ENCODE measurements at regions of chr18 and their contacts with region 1.

Region 1: GRCh38 chr18:35143622-35144596 is 96.9 kb upstream of the ZNF397 start:
- DNase-seq: peak; percentile 47
- ATAC-seq: peak; percentile 100
- H3K4me3 ChIP-seq: no peak overlapping the region
- H3K27ac ChIP-seq: no peak overlapping the region
- H3K4me1 ChIP-seq: 0 out of 2 replicates have a peak, but pooled peaks cover 9% of the 10 kb centered on the region
- H3K27me3 ChIP-seq: no peaks in the 10 kb centered on the region
- CTCF ChIP-seq: peak; percentile 86
- EP300 ChIP-seq: no peak
- POLR2A ChIP-seq: no peak
- RAD21 ChIP-seq: peak; percentile 80

Region 2: GRCh38 chr18:34867520-34867919 is 276.4 kb before region 1 on chr18:
- CTCF ChIA-PET with region 1: interaction called, 6 read pairs
- POLR2A ChIA-PET with region 1: no interaction called
- in situ Hi-C with region 1: no loop called
- intact Hi-C with region 1: loop called (anchors 1 kb)
- DNase-seq: peak; percentile 12
- ATAC-seq: peak; percentile 76
- H3K4me3 ChIP-seq: no peak overlapping the region
- H3K27ac ChIP-seq: no peak overlapping the region
- H3K4me1 ChIP-seq: no peaks in the 10 kb centered on the region
- H3K27me3 ChIP-seq: no peaks in the 10 kb centered on the region
- CTCF ChIP-seq: peak; percentile 68
- EP300 ChIP-seq: no peak
- POLR2A ChIP-seq: no peak
- RAD21 ChIP-seq: 0 out of 2 replicates have a peak, but pooled peaks have one; percentile 17

Region 3: DNA sequence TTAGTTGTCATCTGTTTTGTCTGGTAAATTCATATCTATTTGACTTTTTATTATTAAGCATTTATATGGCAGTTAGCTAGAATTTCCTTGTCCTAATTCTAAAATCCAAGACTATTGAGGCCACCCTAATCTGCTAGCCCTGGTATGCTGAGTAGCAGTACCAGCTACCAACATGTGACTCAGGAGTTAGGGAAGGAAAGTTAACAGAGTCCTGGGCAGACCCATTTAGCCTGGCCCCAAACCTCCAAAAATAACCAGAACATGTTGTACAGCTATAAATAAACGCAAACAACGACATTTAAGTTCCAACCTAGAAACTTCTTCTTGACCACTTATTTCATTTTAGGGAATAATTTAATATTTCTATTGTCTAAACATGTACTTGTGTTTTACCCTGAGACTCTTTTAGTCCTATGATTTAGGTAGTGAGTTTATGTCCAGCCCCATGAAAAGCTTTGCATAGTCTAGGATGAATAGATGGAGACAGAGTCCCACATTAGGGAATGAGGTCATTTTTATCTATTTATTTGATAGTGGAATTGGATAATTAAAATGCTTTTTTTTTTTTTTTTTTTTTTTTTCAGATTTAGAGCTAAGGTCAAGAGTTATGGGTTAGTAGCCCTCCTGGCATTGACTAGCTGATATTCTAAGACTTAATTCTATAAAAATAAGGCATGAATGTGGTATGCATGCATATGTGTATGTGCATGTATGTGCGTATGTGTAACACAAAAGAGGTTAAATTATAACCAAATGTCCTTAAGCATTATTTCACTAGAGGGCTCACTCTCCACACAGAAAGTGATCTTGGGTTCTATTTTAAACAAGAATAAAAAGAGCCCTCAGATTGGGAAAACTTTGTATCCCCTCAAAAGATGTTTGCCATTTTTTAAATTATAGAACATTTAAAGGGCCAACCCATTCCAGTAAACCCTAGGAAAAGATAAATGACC is 262.8 kb before region 1 on chr18:
- CTCF ChIA-PET with region 1: interaction called, 3 read pairs
- POLR2A ChIA-PET with region 1: no interaction called
- in situ Hi-C with region 1: loop called (anchors 5 kb)
- intact Hi-C with region 1: no loop called
- DNase-seq: peak; percentile 53
- ATAC-seq: peak; percentile 48; the same call in 2 of the 3 replicates
- H3K4me3 ChIP-seq: no peak overlapping the region
- H3K27ac ChIP-seq: no peak overlapping the region
- H3K4me1 ChIP-seq: peaks cover 10% of the 10 kb centered on the region
- H3K27me3 ChIP-seq: no peaks in the 10 kb centered on the region
- CTCF ChIP-seq: peak; percentile 61
- EP300 ChIP-seq: no peak
- POLR2A ChIP-seq: no peak
- RAD21 ChIP-seq: peak; percentile 33; the same call in 1 of the 2 replicates

Region 4: DNA sequence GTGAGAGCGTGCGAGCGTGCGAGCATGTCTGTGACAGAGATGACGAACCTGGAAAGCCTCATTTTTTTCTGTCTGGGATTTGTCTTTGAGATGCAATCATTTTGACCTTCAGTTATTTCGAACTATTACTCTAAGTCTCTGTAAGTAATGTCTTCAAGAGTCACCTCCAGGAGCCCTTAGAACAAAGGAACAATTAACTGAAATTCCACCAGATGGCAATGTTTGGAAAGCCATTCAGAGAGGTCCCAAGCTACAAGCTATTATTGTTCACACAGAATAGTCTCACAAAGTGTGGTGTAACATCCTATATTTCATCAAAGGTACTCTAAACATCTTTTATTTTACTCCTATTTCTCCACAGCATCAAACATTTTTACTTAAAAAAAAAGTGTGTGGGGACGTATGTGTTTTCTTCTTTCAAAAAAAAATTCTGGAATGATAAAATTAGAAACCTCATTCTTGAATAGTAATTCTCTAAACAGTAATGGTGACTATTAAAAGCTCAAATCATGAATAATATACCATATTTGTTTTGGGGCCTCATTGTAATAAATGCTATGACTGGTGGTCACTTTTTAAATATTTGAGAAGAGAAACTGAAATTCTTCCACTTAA is 137.8 kb before region 1 on chr18:
- CTCF ChIA-PET with region 1: interaction called, 22 read pairs
- POLR2A ChIA-PET with region 1: interaction called, 4 read pairs
- in situ Hi-C with region 1: loop called (anchors 25 kb)
- intact Hi-C with region 1: loop called (anchors 1 kb)
- DNase-seq: peak; percentile 60
- ATAC-seq: peak; percentile 83
- H3K4me3 ChIP-seq: no peak overlapping the region
- H3K27ac ChIP-seq: no peak overlapping the region
- H3K4me1 ChIP-seq: 0 out of 2 replicates have a peak, but pooled peaks cover 5% of the 10 kb centered on the region
- H3K27me3 ChIP-seq: no peaks in the 10 kb centered on the region
- CTCF ChIP-seq: peak; percentile 76
- EP300 ChIP-seq: no peak
- POLR2A ChIP-seq: no peak
- RAD21 ChIP-seq: peak; percentile 73

Region 5: DNA sequence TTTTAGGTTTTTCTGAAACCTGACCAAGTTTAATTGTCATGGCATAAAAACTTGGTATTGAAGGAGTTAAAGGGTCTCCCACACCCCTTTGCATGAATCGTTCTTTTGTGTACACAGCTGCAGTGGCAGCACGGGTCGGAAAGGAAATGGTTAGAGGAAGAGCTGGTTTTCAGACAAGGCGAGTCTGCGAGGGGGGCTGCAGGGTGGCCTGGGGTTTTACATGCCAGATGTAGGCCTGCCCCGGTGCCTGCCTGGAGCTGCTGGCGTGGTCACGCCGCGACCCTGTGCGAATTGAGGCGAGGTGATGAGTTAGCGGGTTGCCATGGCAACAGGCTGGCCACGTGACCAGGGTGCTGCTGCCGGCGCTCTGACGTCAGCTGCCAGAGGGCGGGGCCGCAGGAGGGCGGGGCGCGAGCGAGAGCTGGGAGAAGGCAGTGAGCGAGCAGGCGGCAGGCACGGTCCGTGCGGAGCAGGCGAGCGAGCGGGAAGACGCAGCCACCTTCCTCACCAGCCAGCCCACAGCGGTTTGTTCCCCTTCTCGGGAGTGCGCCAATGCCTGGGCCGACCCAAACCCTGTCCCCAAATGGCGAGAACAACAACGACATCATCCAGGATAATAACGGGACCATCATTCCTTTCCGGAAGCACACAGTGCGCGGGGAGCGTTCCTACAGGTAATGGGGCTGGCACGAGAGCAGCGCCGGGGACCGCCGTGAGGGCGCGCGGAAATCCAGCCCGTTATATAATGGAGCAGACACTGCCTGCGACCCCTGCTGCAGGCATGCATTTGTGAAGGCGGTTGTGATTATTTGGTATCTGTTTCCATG is 102.7 kb before region 1 on chr18 and contains the start of gene MAPRE2:
- CTCF ChIA-PET with region 1: no interaction called
- POLR2A ChIA-PET with region 1: no interaction called
- in situ Hi-C with region 1: no loop called
- intact Hi-C with region 1: loop called (anchors 10 kb)
- DNase-seq: peak; percentile 89
- ATAC-seq: peak; percentile 97
- H3K4me3 ChIP-seq: peak within 1 kb of the TSS; percentile 74 to 84 (median 83)
- H3K27ac ChIP-seq: peak within 1 kb of the TSS; percentile 71
- H3K4me1 ChIP-seq: peaks cover 49% of the 10 kb centered on the region
- H3K27me3 ChIP-seq: no peaks in the 10 kb centered on the region
- CTCF ChIP-seq: 0 out of 2 replicates have a peak, but pooled peaks have one; percentile 26
- EP300 ChIP-seq: peak in 1 of 2 experiments; percentile 0; a peak in 1 of 4 replicates
- POLR2A ChIP-seq: peak; percentile 96 to 99
- RAD21 ChIP-seq: 0 out of 2 replicates have a peak, but pooled peaks have one; percentile 39
- total RNA-seq, gene MAPRE2: 34.5 and 59.9 TPM in 2 replicates

Region 6: GRCh38 chr18:35231052-35231451 is 87.1 kb after region 1 on chr18:
- CTCF ChIA-PET with region 1: no interaction called
- POLR2A ChIA-PET with region 1: no interaction called
- in situ Hi-C with region 1: no loop called
- intact Hi-C with region 1: no loop called
- DNase-seq: peak; percentile 87
- ATAC-seq: peak; percentile 97
- H3K4me3 ChIP-seq: peak overlapping the region in 2 of 3 experiments; percentile 19 to 28; a peak in 2 of 6 replicates
- H3K27ac ChIP-seq: no peak overlapping the region
- H3K4me1 ChIP-seq: no peaks in the 10 kb centered on the region
- H3K27me3 ChIP-seq: no peaks in the 10 kb centered on the region
- CTCF ChIP-seq: peak; percentile 90
- EP300 ChIP-seq: 0 out of 4 replicates have a peak, but pooled peaks of 1 of the 2 experiments have one; percentile 15
- POLR2A ChIP-seq: no peak
- RAD21 ChIP-seq: peak; percentile 85